ENCODE measurements at regions of chr2 and their contacts with region 1.

Region 1: DNA sequence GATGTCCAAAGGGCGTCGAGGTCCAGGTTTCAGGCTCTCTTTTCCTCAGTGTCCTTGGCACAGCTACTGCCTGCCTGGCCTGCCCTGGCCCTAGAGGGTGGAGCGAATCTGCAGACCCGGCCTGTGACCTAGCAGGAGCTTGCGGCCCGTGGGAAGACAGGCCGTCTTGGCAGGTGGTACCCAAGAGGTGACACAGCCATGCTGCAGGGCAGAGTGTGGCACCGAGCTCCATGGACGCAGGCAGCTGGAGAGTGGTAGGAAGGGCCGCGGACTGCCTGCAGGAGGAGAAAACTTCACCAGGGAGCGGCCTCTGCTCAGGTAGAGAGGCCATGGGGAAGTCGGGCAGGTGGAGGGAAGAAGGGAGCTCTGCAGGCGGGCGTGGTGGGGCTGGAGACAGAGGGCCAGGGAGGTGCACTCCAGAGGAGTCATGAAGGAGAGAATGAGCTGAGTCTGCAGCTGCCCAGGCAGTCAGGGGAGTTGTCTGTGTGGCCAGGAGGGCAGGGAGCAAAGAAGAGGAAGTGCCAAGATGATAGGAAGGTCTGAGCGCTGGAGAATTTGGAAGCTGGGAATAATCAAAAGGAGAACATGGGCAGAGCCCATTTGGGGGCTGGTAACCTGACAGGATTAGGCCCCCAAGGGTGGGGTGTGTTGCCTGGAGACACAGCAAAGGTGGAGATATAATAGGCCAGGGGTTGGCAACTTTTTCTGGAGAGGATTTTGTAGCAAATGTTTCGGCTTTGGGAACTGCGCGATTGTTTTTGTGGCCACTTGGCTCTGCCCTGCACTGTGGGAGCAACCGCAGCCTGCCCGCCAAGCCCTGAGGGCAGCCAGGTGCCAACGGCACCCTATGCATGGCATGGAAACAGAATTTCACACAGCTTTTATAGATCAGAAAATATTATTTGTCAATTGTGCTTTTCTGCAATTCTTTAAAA is 154.4 kb upstream of the PXDN start:
- DNase-seq: no peak
- H3K4me3 ChIP-seq: peak overlapping the region in 1 of 3 donors; percentile 20
- H3K27ac ChIP-seq: no peak overlapping the region
- H3K4me1 ChIP-seq: no peaks in the 10 kb centered on the region
- H3K27me3 ChIP-seq: peaks cover 0 to 7% of the 10 kb centered on the region in 2 donors
- CTCF ChIP-seq: no peak
- POLR2A ChIP-seq: no peak

Region 2: DNA sequence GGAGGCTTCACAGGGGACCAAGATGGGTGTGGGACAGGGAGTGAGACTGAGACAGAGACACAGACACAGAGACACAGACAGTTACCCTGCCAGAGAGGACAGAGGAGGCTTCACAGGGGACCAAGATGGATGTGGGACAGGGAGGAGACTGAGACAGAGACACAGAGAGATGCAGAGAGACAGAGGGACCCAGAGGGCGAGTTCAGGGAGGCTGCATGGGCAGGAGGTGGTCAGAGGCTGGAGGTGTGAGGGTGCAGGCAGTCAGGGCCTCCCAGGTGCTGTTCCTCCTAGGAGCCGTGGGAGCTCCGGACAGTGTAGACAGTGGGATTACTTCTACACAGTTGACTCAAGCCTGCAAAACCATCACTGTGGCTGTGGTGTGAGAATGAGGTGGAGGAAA is 51.7 kb after region 1 on chr2:
- intact Hi-C with region 1: no loop called
- DNase-seq: no peak
- H3K4me3 ChIP-seq: no peak overlapping the region
- H3K27ac ChIP-seq: no peak overlapping the region
- H3K4me1 ChIP-seq: no peaks in the 10 kb centered on the region
- H3K27me3 ChIP-seq: peaks cover 0 to 8% of the 10 kb centered on the region in 2 donors
- CTCF ChIP-seq: no peak
- POLR2A ChIP-seq: no peak

Region 3: DNA sequence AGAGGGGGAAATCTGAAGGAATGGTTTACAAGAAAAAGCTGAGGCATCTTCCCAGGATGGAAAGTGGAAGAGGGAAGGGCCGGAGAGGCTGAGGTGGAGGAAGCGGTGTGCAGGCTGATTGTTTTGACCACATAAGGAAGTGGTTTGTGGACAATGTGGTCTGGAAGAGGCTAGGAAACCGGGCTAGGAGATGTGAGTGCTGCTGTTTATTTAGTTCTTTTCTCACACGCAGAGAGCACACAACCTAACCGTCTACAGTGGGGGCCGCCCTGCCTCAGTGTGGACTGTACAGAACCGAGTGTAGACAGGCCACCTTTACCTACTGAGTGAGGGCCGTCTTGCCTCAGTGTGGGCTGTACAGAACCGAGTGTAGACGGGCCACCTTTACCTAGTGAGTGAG is 97.3 kb after region 1 on chr2:
- intact Hi-C with region 1: loop called (anchors 5 kb)
- DNase-seq: no peak
- H3K4me3 ChIP-seq: no peak overlapping the region
- H3K27ac ChIP-seq: no peak overlapping the region
- H3K4me1 ChIP-seq: no peaks in the 10 kb centered on the region
- H3K27me3 ChIP-seq: peaks cover 0 to 55% of the 10 kb centered on the region in 2 donors
- CTCF ChIP-seq: no peak
- POLR2A ChIP-seq: no peak

Region 4: DNA sequence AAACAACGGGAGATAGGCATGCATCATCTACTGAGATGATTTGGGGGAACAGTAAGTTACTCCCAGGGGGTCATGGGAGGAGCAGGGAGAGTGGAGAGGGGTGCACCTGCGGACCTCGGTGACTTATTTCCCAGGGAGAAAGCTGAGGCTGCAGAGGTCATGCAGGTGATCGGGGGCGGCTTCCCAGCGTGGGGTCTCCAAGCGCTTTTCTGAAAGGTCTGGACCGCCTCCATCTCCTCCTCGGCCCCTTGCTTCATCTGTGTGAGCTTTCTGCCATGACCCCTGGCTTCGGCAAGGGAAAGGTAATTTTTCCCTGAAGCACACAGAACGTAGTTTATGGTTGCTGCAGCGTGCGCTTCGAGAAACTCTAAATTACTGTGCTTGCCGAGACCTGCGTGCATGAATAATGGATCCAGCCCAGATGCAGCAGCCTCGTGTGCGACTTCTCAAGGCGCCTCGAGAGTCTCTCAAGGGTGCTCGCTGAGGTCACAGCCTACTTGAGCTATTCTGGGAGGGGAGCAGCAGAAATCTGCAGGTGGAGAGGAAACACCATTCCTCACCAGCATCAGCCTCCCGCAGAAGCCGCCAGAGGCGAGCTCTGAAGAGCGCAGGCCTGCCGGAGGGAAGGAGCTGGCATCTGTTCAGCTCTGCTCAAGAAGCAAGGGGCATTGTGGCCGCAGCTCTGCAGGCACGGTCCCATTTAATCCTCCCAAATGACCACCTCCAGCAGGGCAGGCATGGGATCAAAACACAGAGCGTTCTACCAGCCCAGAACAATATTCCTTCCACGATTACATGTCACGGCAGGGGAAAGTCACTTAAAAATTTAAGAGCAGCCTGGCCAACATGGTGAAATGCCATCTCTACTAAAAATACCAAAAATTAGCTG is 740.8 kb after region 1 on chr2:
- intact Hi-C with region 1: loop called (anchors 5 kb)
- DNase-seq: no peak
- H3K4me3 ChIP-seq: no peak overlapping the region
- H3K27ac ChIP-seq: no peak overlapping the region
- H3K4me1 ChIP-seq: no peaks in the 10 kb centered on the region
- H3K27me3 ChIP-seq: peaks cover 0 to 40% of the 10 kb centered on the region in 2 donors
- CTCF ChIP-seq: no peak
- POLR2A ChIP-seq: no peak

Measured in breast epithelium (tissue), 4 donors.